ENCODE measurements at regions of chr5 and their contacts with region 1.

Region 1: GRCh38 chr5:78359831-78360673 is at the start of gene SCAMP1:
- DNase-seq: peak; percentile 91
- H3K4me3 Mint-ChIP-seq: peak within 1 kb of the TSS; percentile 95
- H3K27ac Mint-ChIP-seq: peak within 1 kb of the TSS; percentile 94
- H3K4me1 Mint-ChIP-seq: peaks cover 29% of the 10 kb centered on the region
- H3K27me3 Mint-ChIP-seq: no peaks in the 10 kb centered on the region
- total RNA-seq, gene SCAMP1: 17.1 and 17.7 TPM in 2 replicates

Region 2: GRCh38 chr5:78294248-78295034 is 65.6 kb before region 1 on chr5 and contains the start of gene AP3B1:
- intact Hi-C with region 1: loop called (anchors 1 kb)
- DNase-seq: peak; percentile 97
- H3K4me3 Mint-ChIP-seq: peak within 1 kb of the TSS; percentile 99
- H3K27ac Mint-ChIP-seq: peak within 1 kb of the TSS; percentile 96
- H3K4me1 Mint-ChIP-seq: peaks cover 29% of the 10 kb centered on the region
- H3K27me3 Mint-ChIP-seq: peaks cover 3% of the 10 kb centered on the region
- total RNA-seq, gene AP3B1: 42.9 and 43.9 TPM in 2 replicates

Region 3: GRCh38 chr5:78727786-78728761 is 368.0 kb after region 1 on chr5:
- intact Hi-C with region 1: no loop called
- DNase-seq: no peak
- H3K4me3 Mint-ChIP-seq: no peak overlapping the region
- H3K27ac Mint-ChIP-seq: no peak overlapping the region
- H3K4me1 Mint-ChIP-seq: no peaks in the 10 kb centered on the region
- H3K27me3 Mint-ChIP-seq: peaks cover 1% of the 10 kb centered on the region